ENCODE measurements at regions of chr6 and their contacts with region 1.

Region 1: GRCh38 chr6:106979427-106979884 is 4.9 kb upstream of the CD24 start:
- DNase-seq: peak; percentile 52 to 64
- ATAC-seq: peak; percentile 60 to 72
- H3K4me3 ChIP-seq: no peak overlapping the region
- H3K27ac ChIP-seq: no peak overlapping the region
- H3K4me1 ChIP-seq: peaks cover 0 to 1% of the 10 kb centered on the region in 2 donors
- H3K27me3 ChIP-seq: peaks cover 27 to 45% (median 38%) of the 10 kb centered on the region in 3 donors
- CTCF ChIP-seq: peak; percentile 54 to 94 (median 84)
- POLR2A ChIP-seq: no peak

Region 2: DNA sequence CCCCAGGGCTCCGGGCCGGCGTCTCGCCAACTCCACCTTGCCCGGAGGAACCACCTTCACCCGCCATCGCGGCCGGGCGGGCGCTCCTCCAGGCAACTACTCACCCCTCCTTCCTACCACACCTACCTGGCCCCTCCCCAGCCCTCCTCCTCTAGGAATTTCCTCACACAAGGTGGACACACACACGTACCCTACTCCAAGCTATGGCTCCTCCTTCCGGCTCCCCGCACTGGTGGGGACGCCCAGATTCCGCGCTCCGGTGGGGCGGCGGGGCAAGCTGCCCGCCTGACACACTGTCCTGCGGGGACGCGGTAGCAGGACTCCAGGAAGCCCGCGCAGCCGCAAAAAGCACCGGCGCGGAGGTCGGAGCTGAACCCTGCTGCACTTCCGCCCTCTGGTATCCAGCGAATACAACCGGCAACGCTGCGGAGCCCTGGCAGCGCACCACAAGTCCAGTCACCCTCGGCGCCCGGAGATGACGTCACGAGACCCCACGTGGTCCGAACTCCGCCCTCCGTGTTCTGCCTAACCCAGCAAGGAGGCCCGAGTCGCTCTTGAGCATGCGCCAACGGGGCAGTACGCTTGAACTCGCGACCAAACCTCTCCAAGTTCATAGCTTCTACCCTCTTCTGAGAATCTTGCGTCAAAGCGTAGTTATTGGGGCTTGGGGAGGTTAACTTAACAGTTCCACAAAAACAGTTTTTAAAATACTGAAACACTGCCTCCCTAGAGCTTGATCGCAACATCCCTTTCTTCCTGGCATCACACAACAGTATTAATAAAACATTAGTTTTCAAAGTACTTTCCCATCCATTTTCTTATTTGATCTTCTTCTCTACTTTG is 653.9 kb before region 1 on chr6 and contains the start of gene ATG5:
- in situ Hi-C with region 1: loop called in 2 of 4 experiments (anchors 25 kb)
- intact Hi-C with region 1: no loop called
- DNase-seq: peak; percentile 96 to 99
- ATAC-seq: peak; percentile 97
- H3K4me3 ChIP-seq: peak within 1 kb of the TSS; percentile 71 to 90 (median 83)
- H3K27ac ChIP-seq: peak within 1 kb of the TSS; percentile 86 to 93 (median 89)
- H3K4me1 ChIP-seq: peaks cover 13 to 23% of the 10 kb centered on the region in 2 donors
- H3K27me3 ChIP-seq: no peaks in the 10 kb centered on the region
- CTCF ChIP-seq: no peak
- POLR2A ChIP-seq: peak; percentile 64 to 74
- total RNA-seq, gene ATG5: 18.9 to 22.3 (median 20.1) TPM

Region 3: GRCh38 chr6:106339334-106340029 is 640.0 kb before region 1 on chr6:
- in situ Hi-C with region 1: loop called in 2 of 4 experiments (anchors 25 kb)
- intact Hi-C with region 1: loop called (anchors 5 kb)
- DNase-seq: peak in 1 of 2 donors; percentile 19
- ATAC-seq: peak; percentile 52 to 80
- H3K4me3 ChIP-seq: no peak overlapping the region
- H3K27ac ChIP-seq: no peak overlapping the region
- H3K4me1 ChIP-seq: no peaks in the 10 kb centered on the region
- H3K27me3 ChIP-seq: no peaks in the 10 kb centered on the region
- CTCF ChIP-seq: peak in 3 of 5 experiments; percentile 36 to 61 (median 41)
- POLR2A ChIP-seq: no peak

Region 4: DNA sequence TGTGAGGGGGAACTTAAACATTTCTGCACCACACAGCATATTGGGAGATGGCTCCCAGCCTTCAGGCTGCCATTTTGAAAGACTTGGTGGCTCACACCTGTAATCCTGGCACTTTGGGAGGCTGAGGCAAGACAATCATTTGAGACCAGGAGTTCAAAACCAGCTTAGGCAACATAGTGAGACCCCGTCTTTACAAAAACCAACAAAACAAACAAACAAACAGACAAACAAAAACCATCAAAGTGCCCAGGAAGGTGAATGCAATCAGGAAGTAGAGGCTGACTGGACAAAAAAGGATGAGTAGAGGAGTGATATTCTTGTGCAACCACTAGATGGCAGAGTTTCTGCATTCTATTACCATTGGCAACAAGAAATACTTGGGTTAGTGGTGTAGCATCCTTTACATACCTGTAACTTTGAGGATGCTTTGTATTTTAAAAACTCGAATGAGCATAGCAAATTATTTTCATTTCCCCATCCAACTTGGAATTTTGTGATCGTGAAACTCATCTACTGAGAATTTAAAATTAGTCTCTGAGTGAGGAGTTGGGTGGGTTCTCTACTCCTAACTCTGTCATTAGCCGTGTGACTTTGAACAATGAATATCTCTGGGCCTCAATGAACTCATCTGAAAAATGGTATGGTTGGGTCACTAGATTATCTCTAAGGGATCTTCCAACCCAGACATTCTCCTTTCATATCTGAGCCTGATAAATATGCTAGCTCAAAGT is 534.5 kb before region 1 on chr6:
- in situ Hi-C with region 1: loop called (anchors 5 to 25 kb)
- intact Hi-C with region 1: loop called (anchors 1 kb)
- DNase-seq: peak in 1 of 2 donors; percentile 9
- ATAC-seq: peak; percentile 52 to 68
- H3K4me3 ChIP-seq: no peak overlapping the region
- H3K27ac ChIP-seq: no peak overlapping the region
- H3K4me1 ChIP-seq: no peaks in the 10 kb centered on the region
- H3K27me3 ChIP-seq: peaks cover 4 to 20% (median 7%) of the 10 kb centered on the region in 3 donors
- CTCF ChIP-seq: peak; percentile 46 to 74 (median 61)
- POLR2A ChIP-seq: no peak

Region 5: DNA sequence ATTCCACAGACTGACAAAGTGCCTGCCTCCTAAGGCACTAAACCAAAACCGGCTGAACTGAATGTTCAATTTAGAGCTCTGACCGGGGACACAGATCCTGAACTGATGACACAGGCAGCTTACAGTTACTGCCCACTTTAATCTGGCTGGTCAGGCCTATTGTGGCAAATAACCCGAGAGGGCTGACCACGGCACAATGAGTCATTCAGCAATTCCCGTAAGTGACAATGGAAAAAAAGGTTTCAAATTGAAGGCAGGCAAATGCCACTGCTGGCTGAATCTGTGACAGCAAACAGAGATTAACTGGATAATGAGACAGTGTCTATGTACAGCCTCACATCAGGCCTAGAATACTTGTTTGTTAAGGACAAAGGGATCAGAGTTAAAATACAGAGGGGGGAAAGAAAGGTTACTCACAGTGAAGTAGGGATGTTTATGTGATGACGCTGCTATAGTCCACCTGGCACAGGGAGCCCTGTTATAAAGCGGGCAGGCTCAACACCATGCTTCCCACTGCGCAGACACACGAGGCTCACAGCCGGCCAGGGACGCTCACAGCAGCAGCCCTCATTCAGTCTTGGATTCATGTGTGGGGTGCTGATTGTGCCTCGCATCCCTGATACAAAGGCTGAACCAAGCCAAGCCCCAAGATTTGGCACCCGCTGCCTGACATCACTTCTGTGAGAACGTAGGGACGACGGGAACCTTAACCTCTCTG is 404.6 kb before region 1 on chr6:
- in situ Hi-C with region 1: loop called in 1 of 4 experiments (anchors 25 kb)
- intact Hi-C with region 1: no loop called
- DNase-seq: peak; percentile 57 to 74
- ATAC-seq: peak; percentile 92 to 94
- H3K4me3 ChIP-seq: no peak overlapping the region
- H3K27ac ChIP-seq: peak overlapping the region; percentile 78 to 86 (median 84)
- H3K4me1 ChIP-seq: peaks cover 0 to 18% of the 10 kb centered on the region in 2 donors
- H3K27me3 ChIP-seq: no peaks in the 10 kb centered on the region
- CTCF ChIP-seq: no peak
- POLR2A ChIP-seq: peak in 1 of 2 donors; percentile 19

Region 6: GRCh38 chr6:106608062-106608668 is 371.3 kb before region 1 on chr6:
- in situ Hi-C with region 1: loop called in 2 of 4 experiments (anchors 10 to 25 kb)
- intact Hi-C with region 1: loop called (anchors 1 kb)
- DNase-seq: no peak
- ATAC-seq: no peak
- H3K4me3 ChIP-seq: no peak overlapping the region
- H3K27ac ChIP-seq: no peak overlapping the region
- H3K4me1 ChIP-seq: peaks cover 0 to 15% of the 10 kb centered on the region in 2 donors
- H3K27me3 ChIP-seq: no peaks in the 10 kb centered on the region
- CTCF ChIP-seq: peak in 3 of 5 experiments; percentile 17 to 36 (median 18)
- POLR2A ChIP-seq: no peak

Region 7: GRCh38 chr6:106787327-106788196 is 191.9 kb before region 1 on chr6:
- in situ Hi-C with region 1: no loop called
- intact Hi-C with region 1: no loop called
- DNase-seq: no peak
- ATAC-seq: no peak
- H3K4me3 ChIP-seq: no peak overlapping the region
- H3K27ac ChIP-seq: no peak overlapping the region
- H3K4me1 ChIP-seq: peaks cover 0 to 6% of the 10 kb centered on the region in 2 donors
- H3K27me3 ChIP-seq: no peaks in the 10 kb centered on the region
- CTCF ChIP-seq: no peak
- POLR2A ChIP-seq: no peak

Region 8: DNA sequence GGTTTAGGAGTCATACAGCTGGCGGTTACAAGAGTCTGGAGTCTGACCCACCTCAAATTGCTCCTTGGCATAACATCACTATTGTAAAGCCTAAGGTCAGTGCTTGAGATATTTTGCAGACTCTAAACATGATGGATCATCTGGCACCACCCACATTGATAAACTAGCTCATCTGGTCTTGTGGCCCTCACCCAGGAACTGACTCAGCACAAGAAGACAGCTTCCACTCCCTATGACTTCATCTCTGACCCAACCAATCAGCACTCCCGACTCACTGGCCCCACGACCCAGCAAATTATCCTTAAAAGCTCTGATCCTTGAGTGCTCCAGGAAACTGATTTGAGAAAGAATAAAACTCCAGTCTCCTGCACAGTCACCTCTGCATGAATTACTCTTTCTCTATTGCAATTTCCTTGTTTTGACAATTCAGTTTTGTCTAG is 120.8 kb before region 1 on chr6:
- in situ Hi-C with region 1: no loop called
- intact Hi-C with region 1: no loop called
- DNase-seq: no peak
- ATAC-seq: no peak
- H3K4me3 ChIP-seq: no peak overlapping the region
- H3K27ac ChIP-seq: no peak overlapping the region
- H3K4me1 ChIP-seq: no peaks in the 10 kb centered on the region
- H3K27me3 ChIP-seq: no peaks in the 10 kb centered on the region
- CTCF ChIP-seq: no peak
- POLR2A ChIP-seq: no peak

Region 9: DNA sequence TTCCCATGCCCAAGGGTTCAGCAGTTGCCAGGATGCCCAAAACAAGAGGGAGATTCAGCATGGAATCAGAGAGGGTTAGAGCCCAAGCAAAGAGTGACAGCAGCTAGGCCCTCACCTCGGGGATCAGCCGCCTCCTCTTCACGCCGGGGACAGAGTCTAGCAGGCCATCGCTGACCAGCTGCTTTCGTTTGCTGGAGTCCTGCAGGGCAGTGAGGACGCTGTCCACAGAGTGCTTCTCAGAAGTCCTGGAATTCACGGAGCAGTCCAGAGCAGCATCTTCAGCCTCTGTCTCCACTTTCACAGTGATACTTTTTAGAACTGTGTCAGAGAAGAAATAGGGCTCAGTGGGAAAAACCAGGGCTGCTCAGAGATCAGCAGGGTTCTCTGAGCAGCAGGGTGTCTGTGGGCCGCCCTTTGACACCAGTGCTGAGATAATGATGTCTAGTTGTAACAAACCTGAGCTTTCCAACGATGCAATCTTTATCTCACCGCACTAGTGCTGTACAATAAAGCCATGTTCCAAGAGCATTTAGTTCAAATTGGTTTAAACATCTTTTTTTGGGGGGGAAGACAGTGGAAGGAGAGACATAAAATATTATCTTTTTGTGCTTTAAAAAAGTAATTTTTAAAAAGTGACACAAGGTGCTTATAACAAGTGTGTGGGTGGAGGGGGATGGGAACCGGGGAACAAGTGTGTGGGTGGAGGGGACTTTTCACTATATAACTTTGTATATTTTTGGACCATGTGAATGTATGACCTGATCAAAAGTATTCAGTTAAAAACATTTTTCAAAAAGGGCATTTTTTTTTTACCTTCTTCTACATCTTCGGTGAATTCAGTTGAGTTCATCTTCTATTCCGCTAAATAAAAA is 119.2 kb after region 1 on chr6:
- in situ Hi-C with region 1: no loop called
- intact Hi-C with region 1: no loop called
- DNase-seq: no peak
- ATAC-seq: no peak
- H3K4me3 ChIP-seq: no peak overlapping the region
- H3K27ac ChIP-seq: no peak overlapping the region
- H3K4me1 ChIP-seq: peaks cover 0 to 6% of the 10 kb centered on the region in 2 donors
- H3K27me3 ChIP-seq: no peaks in the 10 kb centered on the region
- CTCF ChIP-seq: no peak
- POLR2A ChIP-seq: no peak

Measured in gastrocnemius medialis (tissue), 4 donors.